Endothelial cell of umbilical vein (primary cell): ENCODE measurements at regions of chr20 and their contacts with region 1.

Region 1: GRCh38 chr20:43537921-43538877 is 20.6 kb upstream of the SGK2 start:
- DNase-seq: peak; percentile 59
- H3K4me3 ChIP-seq: no peak overlapping the region
- H3K27ac ChIP-seq: no peak overlapping the region
- H3K4me1 ChIP-seq: no peaks in the 10 kb centered on the region
- H3K27me3 ChIP-seq: no peaks in the 10 kb centered on the region
- CTCF ChIP-seq: peak; percentile 82 to 85
- POLR2A ChIP-seq: no peak

Region 2: GRCh38 chr20:43472671-43473380 is 65.4 kb before region 1 on chr20:
- CTCF ChIA-PET with region 1: no interaction called
- POLR2A ChIA-PET with region 1: no interaction called
- dilution Hi-C with region 1: no loop called
- intact Hi-C with region 1: no loop called
- DNase-seq: no peak
- H3K4me3 ChIP-seq: no peak overlapping the region
- H3K27ac ChIP-seq: no peak overlapping the region
- H3K4me1 ChIP-seq: peaks cover 5% of the 10 kb centered on the region
- H3K27me3 ChIP-seq: peaks cover 5 to 29% of the 10 kb centered on the region in 2 experiments
- CTCF ChIP-seq: no peak
- POLR2A ChIP-seq: no peak

Region 3: GRCh38 chr20:43549416-43550065 is 11.3 kb after region 1 on chr20:
- CTCF ChIA-PET with region 1: interaction called, 21 read pairs
- POLR2A ChIA-PET with region 1: no interaction called
- dilution Hi-C with region 1: no loop called
- intact Hi-C with region 1: no loop called
- DNase-seq: no peak
- H3K4me3 ChIP-seq: no peak overlapping the region
- H3K27ac ChIP-seq: no peak overlapping the region
- H3K4me1 ChIP-seq: no peaks in the 10 kb centered on the region
- H3K27me3 ChIP-seq: no peaks in the 10 kb centered on the region
- CTCF ChIP-seq: no peak
- POLR2A ChIP-seq: no peak

Region 4: DNA sequence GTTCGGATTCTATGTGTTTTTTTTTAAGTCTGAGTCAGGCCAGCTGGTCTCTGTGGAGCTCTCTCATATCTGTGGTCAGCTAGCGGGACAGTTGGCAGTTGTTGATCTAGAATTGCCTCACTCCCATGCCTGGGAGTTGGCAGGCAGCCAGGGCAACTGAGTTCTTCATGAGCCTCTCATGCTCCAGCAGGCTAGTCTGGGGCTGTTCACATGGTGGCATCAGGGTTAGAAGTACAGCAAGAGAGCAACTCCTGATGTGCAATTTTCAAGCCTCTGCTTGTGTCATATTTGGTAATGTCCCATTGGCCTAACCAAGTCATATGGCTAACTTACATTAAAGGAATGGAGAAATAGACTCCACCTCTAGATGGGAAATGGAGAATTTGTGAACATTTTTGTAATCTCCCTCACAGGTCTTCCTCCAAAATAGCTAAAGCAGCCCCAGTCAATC is 45.8 kb after region 1 on chr20:
- CTCF ChIA-PET with region 1: interaction called, 14 read pairs
- POLR2A ChIA-PET with region 1: no interaction called
- dilution Hi-C with region 1: no loop called
- intact Hi-C with region 1: no loop called
- DNase-seq: no peak
- H3K4me3 ChIP-seq: no peak overlapping the region
- H3K27ac ChIP-seq: no peak overlapping the region
- H3K4me1 ChIP-seq: no peaks in the 10 kb centered on the region
- H3K27me3 ChIP-seq: peaks cover 2 to 4% of the 10 kb centered on the region in 2 experiments
- CTCF ChIP-seq: no peak
- POLR2A ChIP-seq: no peak

Region 5: DNA sequence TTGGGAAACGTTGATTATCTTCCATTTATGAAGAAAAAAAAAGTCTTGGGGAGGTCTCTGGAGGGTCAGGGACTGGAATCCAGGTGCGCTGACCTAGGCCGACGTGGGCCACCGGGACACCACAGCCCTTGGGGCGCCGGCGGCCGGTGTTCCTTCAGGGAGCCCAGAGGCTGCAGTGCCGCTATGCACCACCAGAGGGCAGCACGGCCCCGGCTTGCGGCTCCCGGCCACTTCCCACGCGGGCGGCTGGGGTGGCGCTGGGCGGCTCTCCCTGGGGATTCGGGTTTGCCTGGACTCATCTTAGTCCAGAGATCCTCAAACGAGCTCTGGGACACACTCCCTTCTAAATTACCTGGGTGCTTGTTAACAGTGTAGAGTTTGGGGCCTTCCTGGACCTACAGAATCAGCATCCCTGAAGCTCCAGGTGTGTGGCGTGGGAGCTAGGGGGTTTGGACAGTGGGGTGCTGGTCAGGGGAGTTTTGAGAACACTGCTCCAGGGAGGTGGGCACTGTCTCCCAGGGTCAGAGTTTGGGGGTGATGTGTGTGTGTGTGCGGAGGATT is 211.6 kb after region 1 on chr20:
- CTCF ChIA-PET with region 1: no interaction called
- POLR2A ChIA-PET with region 1: no interaction called
- dilution Hi-C with region 1: no loop called
- intact Hi-C with region 1: loop called (anchors 1 kb)
- DNase-seq: peak; percentile 37
- H3K4me3 ChIP-seq: no peak overlapping the region
- H3K27ac ChIP-seq: no peak overlapping the region
- H3K4me1 ChIP-seq: peaks cover 12% of the 10 kb centered on the region
- H3K27me3 ChIP-seq: no peaks in the 10 kb centered on the region
- CTCF ChIP-seq: peak; percentile 99
- POLR2A ChIP-seq: no peak

Region 6: DNA sequence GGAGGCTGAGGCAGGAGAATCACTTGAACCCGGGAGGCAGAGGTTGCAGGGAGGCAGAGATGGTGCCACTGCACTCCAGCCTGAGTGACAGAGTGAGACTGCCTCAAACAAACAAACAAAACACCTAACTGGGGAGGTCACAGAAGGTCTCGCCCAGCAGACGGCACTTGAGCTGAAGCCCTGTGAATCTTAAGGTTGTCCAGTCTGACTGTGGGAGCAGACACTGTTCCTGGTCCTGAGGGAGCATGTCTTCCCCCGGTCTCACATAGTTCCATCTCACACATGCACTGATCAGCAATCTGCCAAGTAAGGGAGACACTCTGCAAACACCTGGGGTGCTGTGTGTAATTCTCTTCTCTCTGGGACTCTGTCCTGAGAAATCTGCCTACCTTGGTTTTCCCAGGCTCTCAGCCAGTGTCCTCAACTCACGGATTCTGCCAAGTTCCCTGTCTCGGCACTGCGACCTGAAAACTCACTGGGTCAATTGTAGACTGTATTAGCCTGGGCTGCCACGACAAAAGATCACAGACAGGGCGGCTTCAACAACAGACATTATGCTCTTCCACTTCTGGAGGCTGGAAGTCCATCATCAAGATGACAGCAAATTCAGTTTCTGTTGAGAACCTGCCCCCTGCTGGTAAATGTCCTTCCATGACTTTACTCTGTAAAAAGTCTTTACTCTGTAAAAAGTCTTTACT is 554.5 kb after region 1 on chr20:
- CTCF ChIA-PET with region 1: interaction called, 85 read pairs
- POLR2A ChIA-PET with region 1: no interaction called
- dilution Hi-C with region 1: no loop called
- intact Hi-C with region 1: loop called (anchors 1 kb)
- DNase-seq: peak; percentile 45
- H3K4me3 ChIP-seq: no peak overlapping the region
- H3K27ac ChIP-seq: no peak overlapping the region
- H3K4me1 ChIP-seq: no peaks in the 10 kb centered on the region
- H3K27me3 ChIP-seq: peaks cover 2% of the 10 kb centered on the region in 2 experiments
- CTCF ChIP-seq: peak; percentile 47 to 52
- POLR2A ChIP-seq: no peak